ENCODE measurements at regions of chr2 and their contacts with region 1.

Region 1: GRCh38 chr2:218269899-218270720 is at the starts of genes AAMP and PNKD:
- DNase-seq: peak; percentile 99 to 100 (median 100)
- ATAC-seq: peak; percentile 90 to 94 (median 91)
- H3K4me3 ChIP-seq: peak within 1 kb of the TSS; percentile 80 to 96
- H3K4me3 Mint-ChIP-seq: peak within 1 kb of the TSS; percentile 92 to 95 (median 94)
- H3K27ac ChIP-seq: peak within 1 kb of the TSS; percentile 59
- H3K27ac Mint-ChIP-seq: peak within 1 kb of the TSS; percentile 87 to 92
- H3K4me1 ChIP-seq: peaks cover 18 to 48% of the 10 kb centered on the region in 2 experiments
- H3K4me1 Mint-ChIP-seq: peaks cover 47 to 61% (median 52%) of the 10 kb centered on the region in 3 donors
- H3K27me3 ChIP-seq: no peaks in the 10 kb centered on the region
- H3K27me3 Mint-ChIP-seq: no peaks in the 10 kb centered on the region
- total RNA-seq, gene AAMP: 46.2 to 71.3 (median 67.4) TPM
- total RNA-seq, gene PNKD: 17.4 to 33.1 (median 30.6) TPM

Region 2: GRCh38 chr2:218286570-218287459 is 16.7 kb after region 1 on chr2:
- CTCF ChIA-PET with region 1: interaction called, 44 to 54 read pairs
- POLR2A ChIA-PET with region 1: interaction called, 7 to 11 read pairs
- DNase-seq: peak; percentile 52 to 94 (median 77)
- ATAC-seq: peak; percentile 70 to 80 (median 72)
- H3K4me3 ChIP-seq: peak overlapping the region; percentile 58 to 72
- H3K4me3 Mint-ChIP-seq: peak overlapping the region; percentile 88 to 91 (median 91)
- H3K27ac ChIP-seq: peak overlapping the region; percentile 99
- H3K27ac Mint-ChIP-seq: peak overlapping the region; percentile 100
- H3K4me1 ChIP-seq: peaks cover 57 to 100% of the 10 kb centered on the region in 2 experiments
- H3K4me1 Mint-ChIP-seq: peaks cover 77 to 86% (median 83%) of the 10 kb centered on the region in 3 donors
- H3K27me3 ChIP-seq: no peaks in the 10 kb centered on the region
- H3K27me3 Mint-ChIP-seq: no peaks in the 10 kb centered on the region

Region 3: GRCh38 chr2:218357236-218358159 is 87.4 kb after region 1 on chr2:
- CTCF ChIA-PET with region 1: interaction called, 11 to 31 read pairs
- POLR2A ChIA-PET with region 1: no interaction called
- DNase-seq: no peak
- ATAC-seq: no peak
- H3K4me3 ChIP-seq: no peak overlapping the region
- H3K4me3 Mint-ChIP-seq: no peak overlapping the region
- H3K27ac ChIP-seq: no peak overlapping the region
- H3K27ac Mint-ChIP-seq: no peak overlapping the region
- H3K4me1 ChIP-seq: peaks cover 0 to 8% of the 10 kb centered on the region in 2 experiments
- H3K4me1 Mint-ChIP-seq: peaks cover 0 to 4% (median 2%) of the 10 kb centered on the region in 3 donors
- H3K27me3 ChIP-seq: peaks cover 0 to 7% of the 10 kb centered on the region in 2 experiments
- H3K27me3 Mint-ChIP-seq: no peaks in the 10 kb centered on the region

Region 4: DNA sequence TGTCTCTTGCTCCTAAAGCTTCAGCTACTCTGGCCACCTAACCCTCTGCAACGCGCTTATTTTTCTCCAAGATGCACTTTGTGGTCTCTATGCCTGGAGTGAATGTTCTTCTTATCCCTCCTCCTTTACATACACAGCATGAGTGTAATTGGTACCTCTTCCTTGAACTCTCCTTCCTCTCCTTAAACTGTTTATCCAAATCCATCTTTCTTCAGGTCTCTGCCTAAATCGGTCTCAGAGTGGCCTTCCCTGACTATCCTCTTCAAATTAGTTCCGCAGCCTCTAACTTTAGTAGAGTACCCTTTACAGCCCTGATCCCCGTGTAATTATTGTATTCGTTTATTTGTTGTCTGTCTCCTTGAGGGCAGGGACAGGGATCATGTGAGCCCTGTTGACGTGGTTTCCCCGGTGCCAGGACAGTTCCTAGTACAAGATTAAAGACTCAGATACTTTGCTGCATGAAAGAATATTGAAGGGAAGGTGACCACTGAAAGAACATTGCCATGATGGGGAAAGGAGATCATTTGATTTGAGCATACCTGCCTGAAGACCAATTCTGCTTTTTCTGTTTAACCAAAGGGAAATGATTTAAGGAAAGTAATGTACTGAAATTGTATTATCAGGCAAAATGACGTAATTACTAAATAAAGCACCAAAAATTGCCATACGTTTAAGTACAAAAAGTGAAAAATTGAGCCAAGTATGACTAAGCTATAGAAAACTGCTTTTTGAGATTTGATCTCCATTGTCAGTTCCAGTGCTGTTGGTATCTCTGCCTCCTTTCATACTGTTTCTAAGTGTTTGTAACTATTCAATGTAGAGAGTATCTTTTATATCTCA is 299.8 kb after region 1 on chr2:
- CTCF ChIA-PET with region 1: no interaction called
- POLR2A ChIA-PET with region 1: no interaction called
- DNase-seq: peak in 4 of 35 experiments; percentile 4 to 41 (median 14)
- ATAC-seq: no peak
- H3K4me3 ChIP-seq: peak overlapping the region; percentile 78 to 91
- H3K4me3 Mint-ChIP-seq: peak overlapping the region; percentile 91 to 96 (median 96)
- H3K27ac ChIP-seq: peak overlapping the region; percentile 98
- H3K27ac Mint-ChIP-seq: peak overlapping the region; percentile 99 to 100
- H3K4me1 ChIP-seq: peaks cover 23 to 24% of the 10 kb centered on the region in 2 experiments
- H3K4me1 Mint-ChIP-seq: peaks cover 54 to 68% (median 66%) of the 10 kb centered on the region in 3 donors
- H3K27me3 ChIP-seq: no peaks in the 10 kb centered on the region
- H3K27me3 Mint-ChIP-seq: no peaks in the 10 kb centered on the region

Region 5: GRCh38 chr2:218694405-218695145 is 424.5 kb after region 1 on chr2:
- CTCF ChIA-PET with region 1: no interaction called
- POLR2A ChIA-PET with region 1: no interaction called
- DNase-seq: no peak
- ATAC-seq: no peak
- H3K4me3 ChIP-seq: no peak overlapping the region
- H3K4me3 Mint-ChIP-seq: no peak overlapping the region
- H3K27ac ChIP-seq: no peak overlapping the region
- H3K27ac Mint-ChIP-seq: no peak overlapping the region
- H3K4me1 ChIP-seq: no peaks in the 10 kb centered on the region
- H3K4me1 Mint-ChIP-seq: no peaks in the 10 kb centered on the region
- H3K27me3 ChIP-seq: no peaks in the 10 kb centered on the region
- H3K27me3 Mint-ChIP-seq: no peaks in the 10 kb centered on the region